Ovary (tissue), 10 donors: ENCODE measurements at regions of chr15 and their contacts with region 1.

Region 1: GRCh38 chr15:75201609-75202250 is at the start of gene C15orf39:
- DNase-seq: peak; percentile 73 to 86 (median 82)
- H3K4me3 ChIP-seq: peak within 1 kb of the TSS; percentile 82
- H3K27ac ChIP-seq: peak within 1 kb of the TSS; percentile 77 to 90
- H3K4me1 ChIP-seq: peaks cover 12% of the 10 kb centered on the region
- H3K27me3 ChIP-seq: no peaks in the 10 kb centered on the region
- CTCF ChIP-seq: peak; percentile 94 to 99 (median 98)
- EP300 ChIP-seq: no peak
- POLR2A ChIP-seq: peak; percentile 98
- total RNA-seq, gene C15orf39: 16.8 to 66.1 (median 46.4) TPM

Region 2: DNA sequence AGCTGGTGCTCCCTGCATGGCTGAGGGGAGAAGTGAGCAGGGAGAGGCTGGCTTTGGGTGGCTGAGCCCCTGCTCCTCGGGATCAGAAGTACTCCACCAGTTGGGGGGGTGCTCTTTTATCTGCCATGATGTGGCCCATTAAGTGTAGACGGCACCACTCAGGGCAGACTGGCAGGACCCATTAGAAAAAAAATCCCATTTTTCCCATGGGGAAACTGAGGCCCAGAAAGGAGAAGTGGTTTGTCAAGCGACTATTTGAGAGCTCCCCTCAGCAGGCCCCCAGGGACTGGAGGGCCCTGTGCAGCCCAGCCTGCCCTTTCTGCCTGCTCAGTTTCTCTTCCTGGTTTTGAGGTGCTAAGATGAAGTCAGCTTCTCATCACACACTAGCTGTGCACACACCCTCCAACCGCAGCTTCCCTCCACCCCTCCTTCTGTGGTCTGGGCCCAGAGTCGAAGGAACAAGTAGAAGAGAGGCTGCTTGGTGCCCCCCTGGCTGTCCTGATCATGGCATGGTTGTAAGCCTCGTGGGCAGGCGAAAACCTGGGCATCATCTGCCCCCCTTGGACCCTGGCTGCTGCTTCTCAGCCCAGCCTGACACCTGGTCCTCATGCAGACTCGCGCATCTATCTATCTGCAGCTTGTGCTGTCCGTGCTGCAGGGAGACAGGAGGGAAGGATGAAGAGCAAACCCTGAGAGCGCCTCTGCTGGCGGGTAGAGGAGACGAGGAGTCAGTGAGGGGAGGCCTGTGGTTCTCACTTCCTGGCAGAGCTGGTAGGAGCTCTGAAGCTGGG is 414.3 kb before region 1 on chr15:
- intact Hi-C with region 1: loop called in 1 of 4 experiments (anchors 10 kb)
- DNase-seq: no peak
- H3K4me3 ChIP-seq: no peak overlapping the region
- H3K27ac ChIP-seq: no peak overlapping the region
- H3K4me1 ChIP-seq: peaks cover 27% of the 10 kb centered on the region
- H3K27me3 ChIP-seq: no peaks in the 10 kb centered on the region
- CTCF ChIP-seq: no peak
- EP300 ChIP-seq: no peak
- POLR2A ChIP-seq: no peak

Region 3: DNA sequence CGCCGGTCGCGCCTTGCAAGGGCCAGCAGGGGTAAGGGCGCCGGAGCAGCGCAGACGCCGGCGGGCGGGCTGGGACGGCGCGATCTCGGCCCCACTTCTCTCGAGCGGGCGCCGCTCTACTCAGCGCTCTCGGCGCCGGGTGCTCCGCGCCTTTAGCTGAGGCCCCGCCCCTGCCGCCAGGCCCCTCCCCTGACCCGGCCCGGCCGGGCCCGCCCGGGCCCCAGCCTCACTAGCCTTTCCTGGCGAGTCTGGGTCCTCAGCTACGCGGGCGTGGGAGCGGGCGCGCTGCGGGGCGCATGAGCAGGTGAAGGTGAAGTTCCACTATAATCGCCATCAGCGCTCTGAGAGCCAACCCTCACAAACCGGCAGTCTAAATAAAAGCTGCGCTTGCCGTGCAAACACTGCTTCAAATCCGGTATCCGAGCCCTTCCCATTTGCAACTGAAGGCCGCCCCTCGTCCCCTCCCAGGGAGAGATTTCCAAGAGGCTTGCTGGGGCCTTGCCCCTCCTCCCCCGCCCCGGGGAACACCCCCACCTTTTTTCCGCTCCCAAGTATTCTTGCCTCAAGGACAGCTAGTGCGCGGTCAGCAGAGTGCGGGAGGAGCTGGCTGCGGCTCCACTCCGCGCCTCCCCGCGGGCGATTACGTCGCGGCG is 245.0 kb before region 1 on chr15 and contains the start of gene RPP25:
- intact Hi-C with region 1: loop called in 3 of 4 experiments (anchors 5 to 10 kb)
- DNase-seq: peak; percentile 80 to 88 (median 86)
- H3K4me3 ChIP-seq: peak within 1 kb of the TSS; percentile 56
- H3K27ac ChIP-seq: peak within 1 kb of the TSS; percentile 50 to 89
- H3K4me1 ChIP-seq: peaks cover 3% of the 10 kb centered on the region
- H3K27me3 ChIP-seq: no peaks in the 10 kb centered on the region
- CTCF ChIP-seq: no peak
- EP300 ChIP-seq: no peak
- POLR2A ChIP-seq: peak; percentile 75
- total RNA-seq, gene RPP25: 13.6 to 41.2 (median 28.6) TPM

Region 4: GRCh38 chr15:75029378-75030022 is 172.2 kb before region 1 on chr15:
- intact Hi-C with region 1: loop called (anchors 1 to 2 kb)
- DNase-seq: peak; percentile 89 to 96 (median 96)
- H3K4me3 ChIP-seq: no peak overlapping the region
- H3K27ac ChIP-seq: peak overlapping the region; percentile 6 to 47
- H3K4me1 ChIP-seq: peaks cover 9% of the 10 kb centered on the region
- H3K27me3 ChIP-seq: no peaks in the 10 kb centered on the region
- CTCF ChIP-seq: peak; percentile 91 to 98 (median 97)
- EP300 ChIP-seq: no peak
- POLR2A ChIP-seq: peak; percentile 23

Region 5: GRCh38 chr15:75042730-75043508 is 158.8 kb before region 1 on chr15:
- intact Hi-C with region 1: loop called (anchors 2 to 5 kb)
- DNase-seq: peak; percentile 54 to 72 (median 65)
- H3K4me3 ChIP-seq: no peak overlapping the region
- H3K27ac ChIP-seq: peak overlapping the region in 1 of 2 donors; percentile 90
- H3K4me1 ChIP-seq: peaks cover 25% of the 10 kb centered on the region
- H3K27me3 ChIP-seq: no peaks in the 10 kb centered on the region
- CTCF ChIP-seq: peak in 1 of 3 donors; percentile 21
- EP300 ChIP-seq: no peak
- POLR2A ChIP-seq: no peak

Region 6: GRCh38 chr15:75090388-75090734 is 111.4 kb before region 1 on chr15:
- intact Hi-C with region 1: no loop called
- DNase-seq: no peak
- H3K4me3 ChIP-seq: no peak overlapping the region
- H3K27ac ChIP-seq: no peak overlapping the region
- H3K4me1 ChIP-seq: no peaks in the 10 kb centered on the region
- H3K27me3 ChIP-seq: no peaks in the 10 kb centered on the region
- CTCF ChIP-seq: no peak
- EP300 ChIP-seq: no peak
- POLR2A ChIP-seq: no peak